Activated T-helper 1 cell treated with anti-CD3 and anti-CD28 coated beads, Interleukin-12 subunit alpha, Interleukin-12 subunit beta, Interleukin-2, Interleukin-4 antibody, amounts not matched to agents 30 ng/mL and 10 ng/mL and 1 ng/mL, durations not matched to agents 14 hours and 24 hours and 36 hours (primary cell): ENCODE measurements at regions of chr3 and their contacts with region 1.

Region 1: DNA sequence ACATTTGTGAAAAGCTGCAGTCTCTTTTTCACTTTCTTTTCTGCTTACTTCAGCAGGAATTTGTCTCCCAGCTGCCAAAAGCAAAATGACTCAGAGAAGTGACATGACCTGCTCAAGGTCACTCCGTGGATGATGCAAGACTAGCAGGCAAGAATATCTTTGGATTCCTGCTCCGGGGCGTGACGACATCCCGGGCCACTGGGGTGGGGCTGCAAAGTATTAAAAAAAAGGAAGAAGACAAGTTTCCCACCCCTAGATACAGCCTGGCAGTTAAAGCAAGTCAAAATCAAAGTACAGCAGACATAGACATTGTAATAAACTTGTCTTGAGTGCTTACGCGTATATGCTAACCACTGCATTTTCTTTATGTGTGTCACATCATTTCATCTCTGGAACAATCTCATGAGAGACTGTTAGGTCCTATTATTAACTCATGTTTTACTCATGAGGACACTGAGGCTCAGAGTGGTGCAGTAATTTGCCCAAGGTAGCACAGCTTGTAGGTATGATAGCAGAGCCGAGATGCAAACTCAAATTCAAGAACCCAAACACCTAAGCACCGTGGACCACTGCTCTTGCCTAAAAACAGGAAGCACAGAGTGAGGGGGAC is 485.2 kb upstream of the PROK2 start:
- DNase-seq: no peak
- H3K4me3 Mint-ChIP-seq: no peak overlapping the region
- H3K27ac Mint-ChIP-seq: peak overlapping the region; percentile 74
- H3K4me1 Mint-ChIP-seq: peaks cover 70% of the 10 kb centered on the region
- H3K27me3 Mint-ChIP-seq: no peaks in the 10 kb centered on the region

Region 2: DNA sequence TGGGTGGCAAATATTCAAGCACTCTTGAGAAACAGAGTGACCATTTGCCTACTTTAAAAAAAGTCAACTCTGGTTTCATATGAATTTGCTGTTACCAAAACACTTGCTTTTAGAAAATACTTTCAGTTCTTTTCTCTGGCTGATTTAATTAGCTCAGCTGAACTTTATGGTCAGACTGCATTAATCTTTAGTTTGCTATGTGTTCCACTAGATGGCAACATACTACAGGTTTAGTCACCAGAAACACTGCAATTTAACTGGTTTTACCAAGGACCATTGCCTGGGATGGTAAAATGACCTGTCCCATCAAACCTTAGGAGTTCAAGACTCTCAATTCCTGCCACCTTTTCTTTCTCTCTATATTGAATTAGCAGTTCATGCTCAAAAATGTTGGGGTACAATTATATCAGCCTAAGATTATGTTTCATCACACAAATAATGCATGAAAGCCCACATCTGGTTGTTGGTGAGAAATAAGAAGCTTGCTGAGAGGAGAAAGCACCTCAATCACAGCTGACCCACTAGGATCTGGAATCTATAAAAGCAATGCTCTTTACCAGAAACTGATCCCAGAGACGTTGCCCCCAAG is 559.2 kb before region 1 on chr3:
- intact Hi-C with region 1: loop called (anchors 5 kb)
- DNase-seq: no peak
- H3K4me3 Mint-ChIP-seq: no peak overlapping the region
- H3K27ac Mint-ChIP-seq: no peak overlapping the region
- H3K4me1 Mint-ChIP-seq: peaks cover 56% of the 10 kb centered on the region
- H3K27me3 Mint-ChIP-seq: no peaks in the 10 kb centered on the region

Region 3: DNA sequence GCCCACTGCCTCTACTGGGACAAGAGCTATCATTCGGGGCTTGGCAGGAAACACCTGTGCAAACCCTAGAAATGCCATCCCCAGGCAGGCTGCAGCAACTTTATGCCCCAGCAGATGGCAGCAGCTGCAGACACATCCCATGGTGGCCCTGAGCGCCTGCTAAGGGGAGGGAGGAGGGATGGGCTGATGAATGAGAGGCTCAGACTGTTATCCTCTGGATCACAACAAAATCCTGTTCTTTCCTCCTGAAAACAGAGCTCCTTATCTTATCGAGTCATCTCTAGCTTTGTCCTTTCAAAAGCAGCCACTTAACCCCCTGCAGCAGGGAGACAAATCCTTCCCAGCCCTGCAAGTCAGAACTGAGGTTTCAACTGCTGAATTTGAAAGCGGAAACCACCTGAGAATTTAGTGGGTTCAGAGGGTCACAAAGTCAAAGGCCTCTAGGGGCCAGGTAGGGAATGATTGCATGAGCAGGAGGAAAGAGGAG is 394.7 kb before region 1 on chr3:
- intact Hi-C with region 1: loop called (anchors 2 kb)
- DNase-seq: peak; percentile 67
- H3K4me3 Mint-ChIP-seq: no peak overlapping the region
- H3K27ac Mint-ChIP-seq: peak overlapping the region; percentile 59
- H3K4me1 Mint-ChIP-seq: peaks cover 38% of the 10 kb centered on the region
- H3K27me3 Mint-ChIP-seq: peaks cover 8% of the 10 kb centered on the region

Region 4: GRCh38 chr3:71926262-71926600 is 343.9 kb before region 1 on chr3:
- intact Hi-C with region 1: loop called (anchors 5 kb)
- DNase-seq: no peak
- H3K4me3 Mint-ChIP-seq: no peak overlapping the region
- H3K27ac Mint-ChIP-seq: no peak overlapping the region
- H3K4me1 Mint-ChIP-seq: peaks cover 12% of the 10 kb centered on the region
- H3K27me3 Mint-ChIP-seq: no peaks in the 10 kb centered on the region

Region 5: GRCh38 chr3:72255191-72255590 is 15.0 kb before region 1 on chr3:
- intact Hi-C with region 1: no loop called
- DNase-seq: no peak
- H3K4me3 Mint-ChIP-seq: no peak overlapping the region
- H3K27ac Mint-ChIP-seq: no peak overlapping the region
- H3K4me1 Mint-ChIP-seq: peaks cover 19% of the 10 kb centered on the region
- H3K27me3 Mint-ChIP-seq: peaks cover 15% of the 10 kb centered on the region

Region 6: GRCh38 chr3:72339116-72340030 is 69.2 kb after region 1 on chr3:
- intact Hi-C with region 1: loop called (anchors 5 kb)
- DNase-seq: no peak
- H3K4me3 Mint-ChIP-seq: no peak overlapping the region
- H3K27ac Mint-ChIP-seq: no peak overlapping the region
- H3K4me1 Mint-ChIP-seq: peaks cover 32% of the 10 kb centered on the region
- H3K27me3 Mint-ChIP-seq: peaks cover under 1% of the 10 kb centered on the region

Region 7: GRCh38 chr3:72756900-72757299 is 486.7 kb after region 1 on chr3:
- intact Hi-C with region 1: loop called (anchors 10 kb)
- DNase-seq: peak; percentile 38
- H3K4me3 Mint-ChIP-seq: peak overlapping the region; percentile 34
- H3K27ac Mint-ChIP-seq: peak overlapping the region; percentile 64
- H3K4me1 Mint-ChIP-seq: peaks cover 50% of the 10 kb centered on the region
- H3K27me3 Mint-ChIP-seq: no peaks in the 10 kb centered on the region

Region 8: DNA sequence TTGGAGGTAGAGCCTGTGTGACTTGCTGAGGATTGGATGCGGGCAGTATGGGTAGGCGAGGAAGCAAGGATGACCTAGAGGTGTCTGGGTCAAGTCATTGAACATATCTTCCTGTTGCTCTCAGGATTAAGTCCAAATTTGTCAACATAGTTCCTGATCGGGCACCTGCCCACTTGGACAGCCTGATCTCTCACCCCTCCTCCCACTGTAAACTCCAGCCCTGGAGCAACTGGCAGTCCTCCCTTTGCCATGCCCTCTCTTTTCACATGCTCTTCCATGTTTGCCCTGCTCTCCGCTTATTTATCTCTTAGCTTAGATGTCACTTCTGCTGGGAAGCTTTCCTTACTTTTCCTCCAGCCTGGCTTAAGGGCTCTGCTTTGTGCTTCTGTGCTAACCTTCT is 678.8 kb after region 1 on chr3:
- intact Hi-C with region 1: no loop called
- DNase-seq: no peak
- H3K4me3 Mint-ChIP-seq: no peak overlapping the region
- H3K27ac Mint-ChIP-seq: no peak overlapping the region
- H3K4me1 Mint-ChIP-seq: peaks cover 19% of the 10 kb centered on the region
- H3K27me3 Mint-ChIP-seq: peaks cover 5% of the 10 kb centered on the region